ENCODE measurements at regions of chr6 and their contacts with region 1.

Region 1: GRCh38 chr6:83067448-83068413 is at the start of gene DOP1A:
- DNase-seq: peak; percentile 85
- ATAC-seq: peak; percentile 86
- H3K4me3 ChIP-seq: peak within 1 kb of the TSS; percentile 87
- H3K27ac ChIP-seq: peak within 1 kb of the TSS; percentile 71
- H3K4me1 ChIP-seq: peaks cover 8% of the 10 kb centered on the region
- H3K27me3 ChIP-seq: no peaks in the 10 kb centered on the region
- CTCF ChIP-seq: peak; percentile 93 to 99 (median 96)
- EP300 ChIP-seq: peak; percentile 26 to 44; a peak in 1 of 4 replicates
- POLR2A ChIP-seq: peak; percentile 92
- RAD21 ChIP-seq: peak; percentile 98
- polyA plus RNA-seq, gene DOP1A: 1.9 to 2.9 TPM

Region 2: GRCh38 chr6:82247634-82248232 is 820.0 kb before region 1 on chr6 and contains the start of gene IBTK:
- CTCF ChIA-PET with region 1: interaction called, 39 read pairs
- POLR2A ChIA-PET with region 1: interaction called, 3 read pairs
- RAD21 ChIA-PET with region 1: interaction called, 20 read pairs
- SMC1A ChIA-PET with region 1: interaction called, 5 read pairs
- in situ Hi-C with region 1: no loop called
- intact Hi-C with region 1: no loop called
- DNase-seq: peak; percentile 69
- ATAC-seq: peak; percentile 89
- H3K4me3 ChIP-seq: peak within 1 kb of the TSS; percentile 76
- H3K27ac ChIP-seq: peak within 1 kb of the TSS; percentile 76
- H3K4me1 ChIP-seq: peaks cover 6% of the 10 kb centered on the region; the same call in 1 of the 2 replicates
- H3K27me3 ChIP-seq: no peaks in the 10 kb centered on the region
- CTCF ChIP-seq: no peak
- EP300 ChIP-seq: no peak
- POLR2A ChIP-seq: peak; percentile 77
- RAD21 ChIP-seq: no peak
- polyA plus RNA-seq, gene IBTK: 12.0 to 16.6 TPM

Region 3: GRCh38 chr6:82995066-82995465 is 72.7 kb before region 1 on chr6:
- CTCF ChIA-PET with region 1: no interaction called
- POLR2A ChIA-PET with region 1: no interaction called
- RAD21 ChIA-PET with region 1: no interaction called
- SMC1A ChIA-PET with region 1: no interaction called
- in situ Hi-C with region 1: no loop called
- intact Hi-C with region 1: no loop called
- DNase-seq: no peak
- ATAC-seq: no peak
- H3K4me3 ChIP-seq: no peak overlapping the region
- H3K27ac ChIP-seq: no peak overlapping the region
- H3K4me1 ChIP-seq: no peaks in the 10 kb centered on the region
- H3K27me3 ChIP-seq: no peaks in the 10 kb centered on the region
- CTCF ChIP-seq: no peak
- EP300 ChIP-seq: no peak
- POLR2A ChIP-seq: no peak
- RAD21 ChIP-seq: no peak

Region 4: GRCh38 chr6:83096791-83097190 is 29.1 kb after region 1 on chr6:
- CTCF ChIA-PET with region 1: interaction called, 17 read pairs
- POLR2A ChIA-PET with region 1: no interaction called
- RAD21 ChIA-PET with region 1: interaction called, 9 read pairs
- SMC1A ChIA-PET with region 1: interaction called, 4 read pairs
- in situ Hi-C with region 1: no loop called
- intact Hi-C with region 1: no loop called
- DNase-seq: no peak
- ATAC-seq: no peak
- H3K4me3 ChIP-seq: no peak overlapping the region
- H3K27ac ChIP-seq: no peak overlapping the region
- H3K4me1 ChIP-seq: no peaks in the 10 kb centered on the region
- H3K27me3 ChIP-seq: no peaks in the 10 kb centered on the region
- CTCF ChIP-seq: no peak
- EP300 ChIP-seq: no peak
- POLR2A ChIP-seq: no peak
- RAD21 ChIP-seq: no peak

Region 5: GRCh38 chr6:83153883-83154521 is 86.3 kb after region 1 on chr6:
- CTCF ChIA-PET with region 1: interaction called, 13 read pairs
- POLR2A ChIA-PET with region 1: no interaction called
- RAD21 ChIA-PET with region 1: interaction called, 5 read pairs
- SMC1A ChIA-PET with region 1: interaction called, 3 read pairs
- in situ Hi-C with region 1: no loop called
- intact Hi-C with region 1: no loop called
- DNase-seq: no peak
- ATAC-seq: no peak
- H3K4me3 ChIP-seq: no peak overlapping the region
- H3K27ac ChIP-seq: no peak overlapping the region
- H3K4me1 ChIP-seq: no peaks in the 10 kb centered on the region
- H3K27me3 ChIP-seq: no peaks in the 10 kb centered on the region
- CTCF ChIP-seq: no peak
- EP300 ChIP-seq: no peak
- POLR2A ChIP-seq: no peak
- RAD21 ChIP-seq: no peak

Region 6: DNA sequence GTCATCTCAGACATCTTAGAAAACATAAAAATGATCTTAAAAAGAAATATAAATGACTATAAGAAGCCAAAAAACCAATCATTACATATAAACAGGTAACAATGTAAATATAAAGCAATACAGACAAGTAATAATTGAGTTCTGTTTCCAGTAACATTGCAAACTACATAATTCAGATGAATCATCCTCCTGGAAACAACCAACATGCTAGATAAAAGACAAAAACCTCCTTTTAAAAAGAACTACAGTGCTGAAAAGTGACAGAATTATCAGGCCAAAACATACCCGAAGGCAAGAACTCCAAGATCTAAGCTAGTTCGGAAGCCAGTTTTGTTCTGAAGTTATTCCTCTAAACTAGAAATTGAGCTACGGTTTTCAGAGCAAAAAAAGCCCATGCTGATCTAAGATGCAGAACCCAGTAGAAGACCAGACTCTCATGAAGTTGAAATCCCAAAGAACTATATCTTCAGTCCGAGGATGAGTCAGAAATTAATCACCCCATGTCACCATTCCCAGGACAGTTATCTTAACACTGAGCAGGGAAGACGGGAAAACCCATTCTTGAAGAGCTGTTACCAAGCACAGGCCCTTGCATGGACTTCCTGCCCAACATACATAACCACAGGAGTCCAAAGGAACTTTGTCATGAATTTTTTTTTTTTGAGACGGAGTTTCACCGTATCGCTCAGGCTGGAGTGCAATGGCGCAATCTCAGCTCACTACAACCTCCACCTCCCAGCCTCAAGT is 115.5 kb after region 1 on chr6:
- CTCF ChIA-PET with region 1: interaction called, 195 read pairs
- POLR2A ChIA-PET with region 1: interaction called, 8 read pairs
- RAD21 ChIA-PET with region 1: interaction called, 93 read pairs
- SMC1A ChIA-PET with region 1: interaction called, 108 read pairs
- in situ Hi-C with region 1: no loop called
- intact Hi-C with region 1: no loop called
- DNase-seq: no peak
- ATAC-seq: no peak
- H3K4me3 ChIP-seq: no peak overlapping the region
- H3K27ac ChIP-seq: no peak overlapping the region
- H3K4me1 ChIP-seq: no peaks in the 10 kb centered on the region
- H3K27me3 ChIP-seq: no peaks in the 10 kb centered on the region
- CTCF ChIP-seq: no peak
- EP300 ChIP-seq: no peak
- POLR2A ChIP-seq: no peak
- RAD21 ChIP-seq: no peak

Region 7: DNA sequence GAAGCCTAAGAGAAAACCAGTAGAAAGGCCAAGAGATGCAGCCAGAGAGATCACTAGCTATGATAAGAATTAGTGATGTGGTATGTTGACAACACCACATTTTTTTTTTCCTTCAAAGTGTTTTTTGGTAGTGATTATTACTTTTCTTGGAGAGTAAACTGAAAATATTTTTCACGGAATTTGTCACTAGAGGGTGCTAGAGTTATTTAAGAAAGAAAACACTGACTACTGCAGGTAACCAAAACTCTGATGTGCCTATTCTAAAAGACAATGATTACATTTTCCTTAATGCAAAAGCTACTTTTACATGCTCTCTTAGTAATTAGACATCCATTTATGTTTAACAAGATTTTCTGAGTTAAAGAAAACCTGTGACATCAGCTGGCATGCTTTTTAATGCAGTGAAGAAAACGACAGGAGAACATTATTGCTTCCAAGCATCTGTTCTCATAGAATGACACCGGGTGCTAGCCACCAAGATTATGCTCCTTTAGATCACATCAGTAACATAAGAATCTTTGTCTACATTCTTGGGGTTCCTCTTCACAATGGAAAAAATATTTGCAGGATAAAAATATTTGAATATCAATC is 154.3 kb after region 1 on chr6:
- CTCF ChIA-PET with region 1: interaction called, 635 read pairs
- POLR2A ChIA-PET with region 1: interaction called, 34 read pairs
- RAD21 ChIA-PET with region 1: interaction called, 215 read pairs
- SMC1A ChIA-PET with region 1: interaction called, 277 read pairs
- in situ Hi-C with region 1: no loop called
- intact Hi-C with region 1: no loop called
- DNase-seq: no peak
- ATAC-seq: peak; percentile 65
- H3K4me3 ChIP-seq: no peak overlapping the region
- H3K27ac ChIP-seq: no peak overlapping the region
- H3K4me1 ChIP-seq: no peaks in the 10 kb centered on the region
- H3K27me3 ChIP-seq: no peaks in the 10 kb centered on the region
- CTCF ChIP-seq: peak; percentile 32 to 61 (median 32); a peak in 2 of 6 replicates
- EP300 ChIP-seq: no peak
- POLR2A ChIP-seq: no peak
- RAD21 ChIP-seq: peak; percentile 74

Region 8: DNA sequence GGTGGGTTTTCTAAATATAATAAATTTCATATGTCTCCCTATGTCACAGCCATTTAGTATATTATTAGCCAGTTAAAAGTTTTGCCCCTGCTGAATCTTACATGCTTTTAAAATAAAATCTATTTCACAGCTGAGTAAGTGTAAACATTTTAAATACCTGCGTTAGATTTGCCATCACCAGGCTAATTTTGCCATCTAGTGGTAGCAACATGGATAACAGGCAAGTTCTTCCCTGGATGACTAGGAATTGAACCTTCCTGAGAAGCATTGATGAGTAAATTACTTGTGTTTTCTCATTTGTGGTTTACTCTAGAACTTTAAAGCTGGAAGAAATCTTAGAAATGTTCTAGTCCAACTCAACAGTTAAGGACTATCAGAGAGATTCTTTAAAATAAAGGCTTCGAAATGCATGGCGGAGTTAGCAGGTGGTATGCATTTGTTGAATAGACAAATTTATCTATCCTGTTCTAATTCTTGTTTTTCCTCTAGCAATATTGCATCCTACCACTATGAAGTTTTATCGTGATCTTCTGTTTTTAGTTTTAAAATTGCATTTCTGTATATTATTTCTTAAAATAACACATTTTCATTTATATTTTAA is 447.2 kb after region 1 on chr6:
- CTCF ChIA-PET with region 1: interaction called, 117 read pairs
- POLR2A ChIA-PET with region 1: interaction called, 3 read pairs
- RAD21 ChIA-PET with region 1: interaction called, 69 read pairs
- SMC1A ChIA-PET with region 1: interaction called, 67 read pairs
- in situ Hi-C with region 1: loop called (anchors 5 kb)
- intact Hi-C with region 1: loop called (anchors 2 kb)
- DNase-seq: peak; percentile 30
- ATAC-seq: peak; percentile 74
- H3K4me3 ChIP-seq: no peak overlapping the region
- H3K27ac ChIP-seq: no peak overlapping the region
- H3K4me1 ChIP-seq: no peaks in the 10 kb centered on the region
- H3K27me3 ChIP-seq: no peaks in the 10 kb centered on the region; a peak in 1 of 4 replicates
- CTCF ChIP-seq: peak; percentile 72 to 82 (median 76)
- EP300 ChIP-seq: no peak
- POLR2A ChIP-seq: no peak
- RAD21 ChIP-seq: peak; percentile 96